ENCODE measurements at regions of chr9 and their contacts with region 1.

Region 1: GRCh38 chr9:120619751-120620655 is 40.0 kb upstream of the CDK5RAP2 start:
- DNase-seq: peak in 39 of 42 donors; percentile 36 to 91 (median 75)

Region 2: GRCh38 chr9:120676767-120677402 is 56.9 kb after region 1 on chr9:
- intact Hi-C with region 1: no loop called
- DNase-seq: no peak

Region 3: DNA sequence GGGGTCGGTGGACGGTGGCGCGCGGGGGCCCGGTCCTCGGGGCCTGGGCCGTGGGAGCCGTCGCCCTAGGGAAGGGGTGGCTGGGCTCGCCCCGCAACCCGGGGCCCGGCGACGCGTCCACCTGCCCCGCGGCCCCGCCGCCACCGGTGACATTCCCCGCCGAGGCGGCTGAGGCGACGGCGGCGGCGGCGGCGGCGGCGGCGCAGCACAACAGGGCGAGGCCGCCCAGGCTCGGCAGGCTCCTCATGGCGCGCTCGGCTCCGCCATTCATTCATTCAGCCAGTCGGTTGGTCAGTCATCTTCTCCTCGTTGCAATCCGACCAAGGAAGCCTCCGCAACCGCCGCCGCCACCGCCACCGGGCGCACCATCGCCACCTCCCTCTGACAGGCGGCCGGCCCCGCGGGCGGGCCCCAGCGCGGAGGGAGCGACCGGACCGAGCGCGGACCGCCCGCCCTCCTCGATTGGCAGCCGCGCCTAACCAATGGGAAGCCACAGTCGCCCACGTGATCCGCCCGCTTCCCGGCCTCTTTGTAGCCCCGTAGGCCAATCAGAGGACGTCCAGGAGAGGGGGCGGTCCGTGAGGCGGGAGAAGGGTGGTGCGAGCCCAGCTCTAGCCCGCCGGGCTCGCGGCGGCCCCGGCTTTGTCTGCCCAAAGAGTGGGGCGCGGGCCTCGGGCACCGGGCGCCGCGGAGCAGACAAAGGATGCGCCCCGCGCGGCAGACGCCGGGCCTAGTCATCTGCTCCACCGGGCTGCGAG is 94.3 kb after region 1 on chr9 and contains the start of gene MEGF9:
- intact Hi-C with region 1: loop called (anchors 5 kb)
- DNase-seq: peak; percentile 98 to 100 (median 100)

Region 4: GRCh38 chr9:120916588-120916987 is 296.6 kb after region 1 on chr9:
- intact Hi-C with region 1: no loop called
- DNase-seq: peak in 39 of 42 donors; percentile 35 to 87 (median 68)